Right ventricle myocardium inferior (tissue), 1 donor: ENCODE measurements at regions of chr4 and their contacts with region 1.

Region 1: DNA sequence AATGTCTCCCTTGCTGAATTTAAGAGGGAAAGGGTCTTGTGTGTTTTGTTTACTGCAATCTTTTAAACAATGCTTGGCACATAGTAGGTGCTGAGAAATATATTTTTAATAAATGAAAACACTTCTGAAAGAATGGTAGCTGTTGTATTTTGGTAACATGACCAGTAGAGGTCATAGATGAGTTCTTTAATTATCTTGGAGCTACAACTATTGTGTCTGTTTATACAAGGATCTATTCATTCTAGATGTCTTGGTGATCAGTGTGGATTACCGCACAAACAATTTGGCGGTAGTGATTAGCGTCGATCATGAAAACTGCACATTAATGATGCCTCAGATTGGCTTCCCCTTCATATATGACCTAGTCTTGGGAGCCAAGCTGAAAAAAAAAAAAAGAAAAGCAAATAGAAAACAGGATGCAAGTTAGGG is 21.4 kb upstream of the SCRG1 start:
- DNase-seq: no peak
- ATAC-seq: no peak

Region 2: GRCh38 chr4:173013232-173013930 is 407.0 kb before region 1 on chr4:
- intact Hi-C with region 1: loop called (anchors 5 kb)
- DNase-seq: no peak
- ATAC-seq: peak; percentile 56

Region 3: DNA sequence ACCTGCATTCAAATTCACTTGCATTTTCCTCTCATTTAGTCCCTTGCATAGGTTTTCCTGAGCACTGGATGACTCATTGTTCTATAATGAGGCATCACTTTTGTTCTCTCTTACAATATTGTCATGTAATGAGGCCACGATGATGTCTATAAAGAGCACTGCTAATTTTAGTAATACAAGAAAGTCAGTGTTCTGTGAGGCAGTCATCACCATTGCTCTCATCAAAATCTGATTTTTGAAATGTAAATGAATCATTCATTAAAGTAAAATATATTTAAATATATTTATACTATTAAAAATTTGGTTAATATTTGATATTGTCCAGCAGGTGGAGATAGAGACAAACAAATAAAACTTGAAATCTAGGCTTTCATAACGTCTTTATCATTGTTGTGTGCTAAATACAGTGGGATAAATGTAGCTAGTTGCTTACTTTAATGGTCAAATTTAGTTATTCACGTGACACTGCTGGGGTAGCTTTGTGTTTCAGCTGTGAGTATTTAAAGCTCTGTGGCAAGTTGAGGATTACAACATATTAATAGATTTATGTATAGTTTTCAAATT is 101.6 kb before region 1 on chr4:
- intact Hi-C with region 1: loop called (anchors 1 kb)
- DNase-seq: no peak
- ATAC-seq: no peak

Region 4: DNA sequence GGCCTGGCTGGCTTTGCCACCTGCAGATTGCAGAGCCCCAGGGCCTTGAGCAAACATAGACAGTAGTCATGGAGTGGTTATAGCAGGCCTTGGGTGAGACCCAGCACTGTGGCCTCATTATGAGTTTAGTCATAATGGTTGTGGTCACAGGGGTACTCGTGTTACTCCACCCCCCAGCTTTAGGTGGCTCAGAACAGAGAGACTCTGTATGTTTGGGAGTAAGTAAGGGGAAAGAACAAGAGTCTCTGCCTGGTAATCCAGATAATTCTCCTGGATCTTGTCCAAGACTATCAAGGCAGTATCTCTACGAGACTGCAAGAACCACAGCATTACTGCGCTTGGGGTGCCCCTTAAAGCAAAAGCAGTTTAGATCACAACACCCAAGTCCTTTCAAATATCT is 40.8 kb after region 1 on chr4:
- intact Hi-C with region 1: no loop called
- DNase-seq: no peak
- ATAC-seq: no peak

Region 5: GRCh38 chr4:173494013-173494970 is 74.0 kb after region 1 on chr4:
- intact Hi-C with region 1: loop called (anchors 2 kb)
- DNase-seq: no peak
- ATAC-seq: peak; percentile 83

Region 6: DNA sequence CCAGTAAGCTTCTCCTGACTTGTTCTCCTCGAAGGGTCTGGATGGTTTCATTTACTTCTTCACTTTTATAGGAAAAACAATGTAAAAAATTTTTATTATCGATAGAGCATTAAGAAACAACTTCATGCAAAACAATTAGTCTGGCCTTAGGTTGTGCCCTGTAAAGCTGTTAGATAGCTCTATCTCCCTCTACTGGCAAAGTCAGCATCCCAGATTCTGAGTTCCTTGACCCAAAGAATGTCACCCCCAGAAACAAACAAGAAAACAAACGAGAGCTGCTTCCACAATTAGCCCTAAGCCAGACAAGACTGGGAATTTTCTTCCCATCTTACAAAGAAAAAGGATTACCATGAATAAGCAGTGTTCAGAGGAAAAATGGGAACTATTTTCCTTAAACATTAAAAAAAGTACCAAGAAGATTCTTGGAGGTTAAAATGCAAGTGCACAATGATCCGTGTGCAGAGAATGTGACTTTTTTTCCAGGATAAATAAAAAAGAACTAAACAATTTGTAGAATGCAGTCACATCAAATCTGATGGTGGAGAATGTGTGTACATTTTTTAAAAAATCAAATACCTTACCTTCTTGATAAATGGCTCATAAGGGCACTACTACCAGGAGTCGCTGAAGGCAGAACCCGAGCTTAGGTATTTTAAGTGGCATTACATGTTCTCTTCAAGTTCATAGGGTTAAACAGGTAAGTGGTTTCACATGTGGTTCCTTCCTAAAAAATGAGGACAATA is 570.0 kb after region 1 on chr4:
- intact Hi-C with region 1: loop called (anchors 10 kb)
- DNase-seq: no peak
- ATAC-seq: peak; percentile 81

Region 7: GRCh38 chr4:174318829-174319764 is 898.8 kb after region 1 on chr4:
- intact Hi-C with region 1: loop called (anchors 10 kb)
- DNase-seq: no peak
- ATAC-seq: no peak